Activated CD4-positive, alpha-beta T cell treated with anti-CD3 and anti-CD28 coated beads, Interleukin-2, amount 10 ng/mL, durations not matched to agents 24 days and 14 days (primary cell): ENCODE measurements at regions of chr3 and their contacts with region 1.

Region 1: DNA sequence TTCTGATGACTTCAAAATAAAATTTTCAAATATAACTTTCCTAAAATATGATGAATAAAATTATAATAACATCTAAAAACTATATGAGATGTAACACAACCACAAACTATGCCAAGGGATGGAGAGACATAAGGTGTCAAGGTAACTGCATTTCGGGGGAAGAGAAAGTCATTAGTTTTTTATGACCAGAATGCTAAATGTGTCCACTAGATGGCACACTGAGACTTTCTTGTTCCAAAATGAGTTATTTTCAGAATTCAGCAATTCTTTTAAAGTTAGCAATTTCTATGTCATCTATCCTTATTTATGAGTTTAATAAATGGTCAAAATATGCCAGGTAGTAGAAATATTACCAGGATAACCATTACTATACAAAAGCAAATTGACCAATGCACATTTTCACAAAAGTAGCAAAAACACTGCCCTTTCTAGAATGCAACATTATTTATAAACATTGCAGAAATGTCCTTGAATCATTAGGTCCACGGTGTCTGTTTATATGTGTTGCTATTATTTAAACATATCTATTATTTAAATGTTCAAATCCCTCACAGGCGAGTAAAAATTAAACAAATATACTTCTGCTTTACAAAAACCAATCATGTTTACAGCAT is 374.2 kb downstream of the PLCL2 start:
- DNase-seq: peak; percentile 75
- H3K4me3 Mint-ChIP-seq: no peak overlapping the region
- H3K27ac Mint-ChIP-seq: no peak overlapping the region
- H3K4me1 Mint-ChIP-seq: peaks cover 4% of the 10 kb centered on the region
- H3K27me3 Mint-ChIP-seq: peaks cover 4% of the 10 kb centered on the region

Region 2: GRCh38 chr3:17412950-17413530 is 154.1 kb after region 1 on chr3:
- intact Hi-C with region 1: loop called (anchors 1 kb)
- DNase-seq: peak; percentile 78
- H3K4me3 Mint-ChIP-seq: no peak overlapping the region
- H3K27ac Mint-ChIP-seq: no peak overlapping the region
- H3K4me1 Mint-ChIP-seq: no peaks in the 10 kb centered on the region
- H3K27me3 Mint-ChIP-seq: no peaks in the 10 kb centered on the region